ENCODE measurements at regions of chr13 and their contacts with region 1.

Region 1: GRCh38 chr13:50224534-50224933 is 209.3 kb downstream of the KCNRG start:
- DNase-seq: no peak
- H3K4me3 Mint-ChIP-seq: peak overlapping the region; percentile 12
- H3K27ac Mint-ChIP-seq: peak overlapping the region; percentile 24
- H3K4me1 Mint-ChIP-seq: peaks cover 75% of the 10 kb centered on the region
- H3K27me3 Mint-ChIP-seq: peaks cover 38% of the 10 kb centered on the region

Region 2: GRCh38 chr13:50130123-50130946 is 94.2 kb before region 1 on chr13:
- intact Hi-C with region 1: loop called (anchors 1 kb)
- DNase-seq: no peak
- H3K4me3 Mint-ChIP-seq: peak overlapping the region; percentile 83
- H3K27ac Mint-ChIP-seq: peak overlapping the region; percentile 94
- H3K4me1 Mint-ChIP-seq: peaks cover 56% of the 10 kb centered on the region
- H3K27me3 Mint-ChIP-seq: peaks cover 41% of the 10 kb centered on the region

Region 3: GRCh38 chr13:50209631-50210030 is 14.9 kb before region 1 on chr13:
- intact Hi-C with region 1: loop called (anchors 1 kb)
- DNase-seq: no peak
- H3K4me3 Mint-ChIP-seq: no peak overlapping the region
- H3K27ac Mint-ChIP-seq: no peak overlapping the region
- H3K4me1 Mint-ChIP-seq: peaks cover 13% of the 10 kb centered on the region
- H3K27me3 Mint-ChIP-seq: peaks cover 27% of the 10 kb centered on the region

Region 4: DNA sequence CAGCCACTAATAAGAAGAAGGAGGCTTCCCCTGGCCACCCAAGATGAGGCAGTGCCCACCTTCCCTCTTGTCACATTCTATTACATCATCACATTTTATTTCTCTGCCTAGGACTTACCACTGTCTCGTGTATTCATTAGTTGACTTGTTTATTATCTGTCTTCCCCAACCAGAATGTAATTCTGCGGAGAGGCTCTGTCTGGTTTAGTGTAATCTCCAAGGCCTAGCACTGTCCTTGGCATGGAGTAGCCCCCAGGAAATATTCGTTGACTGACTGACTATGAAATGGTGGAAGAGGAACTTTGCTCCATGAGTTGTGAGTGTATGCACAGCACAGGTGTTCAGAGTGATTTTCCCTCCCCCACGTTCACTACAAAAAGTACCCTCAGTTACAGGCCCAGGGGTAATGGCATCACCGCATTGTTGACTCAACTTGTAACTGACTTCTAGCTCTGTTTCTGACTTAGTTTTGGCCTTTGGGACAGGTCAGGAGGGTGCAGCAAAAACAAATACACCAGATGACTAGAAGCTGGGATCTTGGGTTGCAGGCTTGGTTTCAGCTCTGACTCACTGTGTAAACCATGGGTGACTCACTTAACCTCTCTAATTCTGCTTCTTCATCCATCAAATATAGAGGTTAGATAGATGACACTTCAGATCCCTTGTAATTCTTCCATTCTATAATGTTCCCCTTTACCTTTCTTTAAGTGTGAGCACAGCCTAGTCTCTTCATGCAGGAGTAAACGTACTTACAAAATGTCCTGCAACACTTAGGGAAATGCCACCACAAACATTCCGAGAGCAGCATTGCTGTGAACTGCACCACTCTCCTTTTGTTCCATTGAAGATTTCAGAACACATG is 20.4 kb after region 1 on chr13:
- intact Hi-C with region 1: loop called (anchors 1 kb)
- DNase-seq: peak; percentile 53
- H3K4me3 Mint-ChIP-seq: peak overlapping the region; percentile 20
- H3K27ac Mint-ChIP-seq: peak overlapping the region; percentile 73
- H3K4me1 Mint-ChIP-seq: peaks cover 56% of the 10 kb centered on the region
- H3K27me3 Mint-ChIP-seq: peaks cover 21% of the 10 kb centered on the region

Region 5: DNA sequence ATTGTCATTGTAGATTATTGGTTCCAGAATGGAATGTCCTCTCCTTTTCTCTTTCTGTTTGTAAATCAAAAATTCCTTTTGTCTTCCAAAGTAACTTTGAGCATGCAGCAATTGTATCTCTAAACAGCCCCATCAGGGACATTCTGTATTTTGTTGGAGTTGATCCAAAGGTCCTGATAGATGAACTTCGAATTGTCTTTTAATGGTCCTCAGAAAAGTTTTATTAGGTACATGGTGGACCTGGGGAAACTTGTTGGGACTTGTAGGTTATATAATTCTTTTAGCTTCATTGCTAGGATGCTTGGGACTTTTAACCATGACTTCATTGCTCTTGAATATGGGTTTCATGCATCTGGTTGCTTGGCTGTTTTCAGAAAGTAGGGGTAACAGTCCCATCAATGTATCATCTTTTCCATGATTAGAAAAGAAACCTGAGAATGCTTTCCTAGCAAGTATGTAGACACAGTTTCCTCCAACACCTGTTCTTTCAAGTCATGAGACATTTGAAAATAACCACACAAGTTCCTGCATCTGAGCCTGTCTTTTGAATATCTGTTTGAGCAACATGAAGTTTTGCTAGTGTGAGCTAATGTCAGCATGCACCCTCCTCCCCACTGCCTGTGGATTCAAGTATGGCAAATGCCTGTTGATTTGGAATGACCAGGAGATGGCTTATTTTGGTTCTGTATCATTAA is 203.8 kb after region 1 on chr13:
- intact Hi-C with region 1: loop called (anchors 2 kb)
- DNase-seq: no peak
- H3K4me3 Mint-ChIP-seq: no peak overlapping the region
- H3K27ac Mint-ChIP-seq: peak overlapping the region; percentile 56
- H3K4me1 Mint-ChIP-seq: peaks cover 11% of the 10 kb centered on the region
- H3K27me3 Mint-ChIP-seq: peaks cover 5% of the 10 kb centered on the region

Measured in activated T-helper 1 cell treated with anti-CD3 and anti-CD28 coated beads, Interleukin-12 subunit alpha, Interleukin-12 subunit beta, Interleukin-2, Interleukin-4 antibody, amounts not matched to agents 30 ng/mL and 10 ng/mL and 1 ng/mL, durations not matched to agents 14 hours and 24 hours and 36 hours (primary cell).